Panc1 (cell line): ENCODE measurements at regions of chr19 and their contacts with region 1.

Region 1: DNA sequence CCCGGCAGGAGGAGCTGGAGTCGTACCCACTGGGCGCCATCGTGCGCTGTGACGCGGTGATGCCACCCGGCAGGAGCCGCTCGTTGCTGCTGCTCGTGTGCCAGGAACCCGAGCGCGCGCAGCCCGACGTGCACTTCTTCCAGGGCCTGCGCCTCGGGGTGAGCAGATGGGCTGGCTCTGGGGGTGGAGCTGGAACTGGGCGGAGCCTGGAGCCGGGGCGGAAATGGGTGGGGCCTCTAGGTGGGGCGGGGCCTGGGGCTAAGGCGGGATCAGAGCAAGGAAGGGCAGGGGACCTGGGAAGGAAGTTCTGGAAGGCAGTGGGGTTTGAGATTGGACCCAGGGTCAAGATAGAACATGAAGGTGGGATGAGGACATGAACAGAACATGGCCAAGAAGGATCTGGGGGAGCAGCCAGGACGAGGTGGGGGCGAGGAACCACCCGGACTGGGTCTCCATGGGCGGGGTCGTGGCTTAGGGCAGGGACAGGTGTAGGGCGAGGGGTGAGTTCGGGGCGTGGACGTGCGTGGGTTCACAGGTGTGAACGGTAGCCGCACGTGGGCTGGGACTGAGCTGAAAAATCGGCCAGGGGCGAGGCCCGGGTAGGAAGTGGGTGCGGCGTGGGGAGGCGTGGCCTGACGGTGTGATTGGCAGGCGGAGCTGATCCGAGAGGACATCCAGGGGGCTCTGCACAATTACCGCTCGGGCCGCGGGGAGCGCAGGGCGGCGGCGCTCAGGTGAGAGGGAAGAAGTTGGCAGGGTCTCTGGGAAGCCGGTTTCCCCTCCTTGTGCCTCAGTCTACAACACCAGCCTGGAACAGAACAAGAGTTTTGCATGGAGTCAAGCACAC is 4.7 kb downstream of the EPS8L1 start:
- DNase-seq: no peak
- ATAC-seq: peak; percentile 89
- H3K4me3 ChIP-seq: peak overlapping the region; percentile 39 to 61
- H3K27ac ChIP-seq: peak overlapping the region; percentile 67; the same call in 1 of the 2 replicates
- H3K4me1 ChIP-seq: peaks cover 2% of the 10 kb centered on the region; the same call in 1 of the 2 replicates
- H3K27me3 ChIP-seq: no peaks in the 10 kb centered on the region
- CTCF ChIP-seq: no peak

Region 2: GRCh38 chr19:54653181-54653809 is 427.0 kb before region 1 on chr19:
- CTCF ChIA-PET with region 1: interaction called, 11 read pairs
- POLR2A ChIA-PET with region 1: no interaction called
- in situ Hi-C with region 1: no loop called
- intact Hi-C with region 1: no loop called
- DNase-seq: peak; percentile 17
- ATAC-seq: peak; percentile 79
- H3K4me3 ChIP-seq: no peak overlapping the region
- H3K27ac ChIP-seq: no peak overlapping the region
- H3K4me1 ChIP-seq: no peaks in the 10 kb centered on the region
- H3K27me3 ChIP-seq: peaks cover 3% of the 10 kb centered on the region; the same call in 1 of the 2 replicates
- CTCF ChIP-seq: peak; percentile 87